ENCODE measurements at regions of chr15 and their contacts with region 1.

Region 1: GRCh38 chr15:80152180-80152845 is 486 bp upstream of the FAH start:
- DNase-seq: peak; percentile 96
- ATAC-seq: peak; percentile 89 to 94

Region 2: DNA sequence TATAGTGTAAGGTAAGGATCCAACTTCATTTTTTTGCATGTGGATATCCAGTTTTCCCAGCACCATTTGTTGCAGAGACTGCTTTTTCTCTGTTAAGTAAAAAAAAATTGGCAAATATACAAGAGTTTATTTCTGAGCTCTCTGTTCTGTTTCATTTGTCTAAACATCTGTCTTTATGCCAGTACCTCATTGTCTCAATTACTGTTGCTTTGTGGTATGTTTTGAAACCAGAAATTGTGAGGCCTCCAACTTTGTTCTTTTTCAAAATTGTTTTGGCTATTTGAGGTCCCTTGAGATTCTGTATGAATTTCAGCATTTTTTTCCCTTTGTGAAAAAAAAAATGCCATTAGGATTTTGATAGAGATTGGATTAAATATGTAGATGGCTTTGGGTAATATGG is 569.7 kb before region 1 on chr15:
- intact Hi-C with region 1: no loop called
- DNase-seq: no peak
- ATAC-seq: no peak

Region 3: DNA sequence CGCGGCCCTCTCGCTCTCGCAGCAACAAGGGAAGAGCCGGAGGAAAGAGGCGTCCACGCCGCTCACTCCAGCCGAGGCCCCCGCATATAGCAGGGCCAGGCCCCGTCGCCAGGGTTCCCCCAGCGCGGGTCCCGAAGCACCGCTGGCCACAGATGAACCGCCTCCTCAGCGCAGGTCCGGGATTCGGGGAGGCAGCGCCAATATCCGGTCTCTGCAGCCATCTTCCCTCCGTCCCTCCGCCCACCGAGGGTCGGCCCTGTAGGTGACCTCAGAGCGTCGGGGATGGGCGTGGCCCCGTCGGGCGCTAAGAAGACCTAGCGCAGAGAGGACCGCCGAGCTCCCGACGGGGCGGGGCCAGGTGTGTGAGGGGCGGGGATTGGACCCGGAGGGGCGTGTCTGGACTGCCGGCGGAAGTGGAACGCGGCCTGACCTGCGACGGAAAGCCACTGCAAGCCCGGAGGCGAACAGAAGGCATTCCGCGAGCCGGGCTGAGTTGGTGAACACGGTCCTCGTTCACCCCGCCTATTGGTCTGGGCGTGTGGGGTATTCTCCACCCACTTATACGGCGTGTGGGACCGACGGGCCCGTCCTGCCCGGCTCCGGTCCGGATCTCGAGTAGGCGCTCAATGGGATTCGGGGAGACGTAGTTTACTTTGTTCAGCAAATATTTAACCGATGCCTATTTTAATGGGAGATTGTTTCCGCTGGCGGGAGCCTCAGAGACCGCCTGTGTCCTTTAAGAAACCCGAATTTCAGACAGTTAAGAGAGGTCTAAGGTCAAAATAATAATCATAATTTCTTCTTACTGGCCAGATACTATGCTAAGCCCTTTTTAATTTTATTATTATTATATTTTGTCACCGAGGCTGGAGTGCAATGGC is 228.6 kb before region 1 on chr15:
- intact Hi-C with region 1: loop called in 1 of 2 experiments (anchors 10 kb)
- DNase-seq: peak; percentile 93
- ATAC-seq: peak; percentile 98 to 99

Region 4: GRCh38 chr15:80058851-80059785 is 93.2 kb before region 1 on chr15 and contains the start of gene ZFAND6:
- intact Hi-C with region 1: loop called in 1 of 2 experiments (anchors 5 kb)
- DNase-seq: peak; percentile 97
- ATAC-seq: peak; percentile 98
- total RNA-seq, gene ZFAND6: 64.2 to 64.3 TPM

Measured in left cardiac atrium (tissue), 4 donors.